ENCODE measurements at regions of chr11 and their contacts with region 1.

Region 1: DNA sequence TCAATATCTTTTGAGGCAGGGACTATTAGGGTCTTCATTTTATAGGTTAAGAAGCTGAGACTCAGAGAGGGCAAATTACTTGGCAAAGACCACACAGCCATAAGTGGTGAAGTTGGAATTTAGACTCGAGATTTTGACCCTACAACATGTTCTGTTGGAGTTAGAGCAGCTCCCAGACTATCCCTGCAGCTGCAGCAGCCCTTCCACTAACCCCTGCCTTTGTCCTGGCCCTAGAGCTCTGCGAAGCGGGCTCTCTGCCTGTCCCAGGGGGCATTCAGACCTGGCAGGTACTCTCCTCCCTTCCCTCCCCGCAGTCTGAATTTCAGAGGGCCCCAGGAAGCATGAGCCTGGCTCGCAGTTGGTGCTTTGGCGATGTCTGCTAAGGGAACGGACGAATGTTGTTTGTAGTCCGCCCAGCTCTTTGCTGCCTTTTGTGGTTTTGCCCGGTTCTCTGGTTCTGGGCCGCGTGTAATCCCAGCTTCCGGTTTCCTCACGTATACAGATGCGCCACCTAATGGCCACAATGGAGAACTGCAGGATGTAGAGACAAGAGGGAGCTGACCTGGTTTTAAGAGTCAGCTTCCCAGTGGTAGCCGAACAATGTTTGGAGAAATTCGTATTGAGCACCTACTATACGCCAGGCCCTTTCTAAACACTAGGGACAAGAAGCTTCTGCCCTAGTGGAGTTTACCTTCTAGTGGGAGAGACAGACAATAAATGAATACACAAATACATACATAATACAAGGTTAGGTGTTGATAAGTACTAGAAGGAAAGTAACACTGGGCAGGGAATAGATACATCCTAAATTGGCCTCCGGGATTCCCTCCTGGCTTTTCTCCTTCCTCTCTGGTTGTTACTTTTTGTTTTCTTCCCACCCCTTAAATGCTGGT is 125.2 kb downstream of the ST3GAL4 start:
- DNase-seq: peak; percentile 83
- H3K4me3 Mint-ChIP-seq: peak overlapping the region; percentile 14
- H3K27ac Mint-ChIP-seq: peak overlapping the region; percentile 81
- H3K4me1 Mint-ChIP-seq: peaks cover 33% of the 10 kb centered on the region
- H3K27me3 Mint-ChIP-seq: peaks cover 9% of the 10 kb centered on the region

Region 2: GRCh38 chr11:126310228-126310991 is 170.2 kb before region 1 on chr11:
- CTCF ChIA-PET with region 1: interaction called, 61 read pairs
- DNase-seq: peak; percentile 68
- H3K4me3 Mint-ChIP-seq: no peak overlapping the region
- H3K27ac Mint-ChIP-seq: peak overlapping the region; percentile 54
- H3K4me1 Mint-ChIP-seq: peaks cover 27% of the 10 kb centered on the region
- H3K27me3 Mint-ChIP-seq: no peaks in the 10 kb centered on the region

Region 3: DNA sequence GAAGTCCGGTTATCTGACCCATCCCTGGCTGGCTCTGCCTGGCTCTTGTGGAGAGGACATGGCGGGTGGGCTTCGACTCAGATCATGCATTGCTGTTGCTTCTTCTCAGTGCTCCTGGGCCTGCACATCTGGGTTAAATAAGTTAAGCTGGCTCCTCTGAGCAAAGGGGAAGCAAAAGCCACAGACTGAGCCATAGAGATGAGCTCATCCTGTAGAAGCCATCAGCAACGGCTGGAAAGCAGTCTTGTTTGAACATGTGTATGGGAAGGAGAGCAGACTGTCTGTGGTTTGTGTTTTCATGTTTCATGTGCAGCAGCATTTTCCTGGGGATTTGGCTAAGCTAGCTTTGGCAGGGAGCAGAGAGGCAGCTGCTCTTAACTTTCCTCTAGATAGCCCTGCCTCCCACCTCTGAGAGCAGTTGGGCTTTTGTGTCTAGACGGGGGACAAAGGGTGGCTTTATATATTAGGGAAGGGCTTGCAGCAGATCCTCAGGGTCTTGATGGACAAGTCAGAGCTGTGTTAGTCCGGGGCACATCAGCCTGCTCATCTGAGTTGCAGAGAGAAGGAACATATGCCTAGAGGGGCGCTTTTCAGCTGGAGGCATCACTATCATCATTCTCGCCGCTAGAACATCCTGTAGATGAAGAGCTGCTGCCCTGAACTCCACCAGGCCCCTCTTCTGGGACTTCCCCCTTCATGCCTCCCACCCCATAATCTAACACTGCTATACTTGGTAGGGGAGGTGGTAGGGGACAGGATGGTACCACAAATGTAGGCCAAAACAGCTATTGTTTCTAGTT is 161.9 kb before region 1 on chr11:
- CTCF ChIA-PET with region 1: interaction called, 11 read pairs
- DNase-seq: peak; percentile 56
- H3K4me3 Mint-ChIP-seq: peak overlapping the region; percentile 1
- H3K27ac Mint-ChIP-seq: peak overlapping the region; percentile 88
- H3K4me1 Mint-ChIP-seq: peaks cover 37% of the 10 kb centered on the region
- H3K27me3 Mint-ChIP-seq: no peaks in the 10 kb centered on the region

Region 4: GRCh38 chr11:126440792-126441514 is 39.7 kb before region 1 on chr11:
- CTCF ChIA-PET with region 1: interaction called, 190 read pairs
- DNase-seq: peak; percentile 80
- H3K4me3 Mint-ChIP-seq: no peak overlapping the region
- H3K27ac Mint-ChIP-seq: no peak overlapping the region
- H3K4me1 Mint-ChIP-seq: peaks cover 8% of the 10 kb centered on the region
- H3K27me3 Mint-ChIP-seq: peaks cover 37% of the 10 kb centered on the region

Region 5: DNA sequence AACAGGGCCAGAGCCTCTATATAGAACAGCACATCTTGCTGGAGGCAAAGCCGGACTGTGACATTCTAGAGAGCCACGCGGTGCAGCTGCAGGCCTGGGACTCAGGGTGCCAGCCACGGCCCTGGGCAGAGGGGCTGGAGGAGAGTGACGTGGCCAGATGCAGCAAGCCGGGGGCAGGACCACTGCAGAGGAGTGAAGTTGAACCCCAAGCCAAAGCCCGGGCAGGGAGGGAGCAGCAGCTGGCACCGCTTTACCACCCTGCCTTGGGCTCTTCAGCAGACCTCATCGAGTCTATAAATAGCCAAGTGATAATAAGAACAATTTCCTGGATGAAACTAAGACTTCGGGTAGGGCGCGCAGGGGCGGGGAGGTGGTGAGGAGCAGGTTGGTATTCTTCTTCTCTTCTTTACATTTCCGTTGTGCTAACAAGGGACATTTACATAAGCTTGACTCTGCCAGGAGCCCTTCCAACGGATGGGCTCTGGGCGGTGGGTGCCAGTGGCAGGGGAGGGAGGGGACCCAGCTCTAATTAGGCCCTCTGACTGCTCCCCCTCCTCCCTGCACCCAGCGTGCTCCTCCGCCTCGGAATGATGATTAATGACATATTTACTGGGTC is 15.0 kb before region 1 on chr11:
- CTCF ChIA-PET with region 1: interaction called, 81 read pairs
- DNase-seq: peak; percentile 80
- H3K4me3 Mint-ChIP-seq: peak overlapping the region; percentile 64
- H3K27ac Mint-ChIP-seq: peak overlapping the region; percentile 96
- H3K4me1 Mint-ChIP-seq: peaks cover 48% of the 10 kb centered on the region
- H3K27me3 Mint-ChIP-seq: peaks cover 40% of the 10 kb centered on the region

Region 6: GRCh38 chr11:126502159-126502558 is 21.5 kb after region 1 on chr11:
- CTCF ChIA-PET with region 1: interaction called, 10 read pairs
- DNase-seq: no peak
- H3K4me3 Mint-ChIP-seq: no peak overlapping the region
- H3K27ac Mint-ChIP-seq: no peak overlapping the region
- H3K4me1 Mint-ChIP-seq: no peaks in the 10 kb centered on the region
- H3K27me3 Mint-ChIP-seq: peaks cover 34% of the 10 kb centered on the region

Region 7: GRCh38 chr11:126585781-126586491 is 105.3 kb after region 1 on chr11:
- CTCF ChIA-PET with region 1: no interaction called
- DNase-seq: no peak
- H3K4me3 Mint-ChIP-seq: no peak overlapping the region
- H3K27ac Mint-ChIP-seq: no peak overlapping the region
- H3K4me1 Mint-ChIP-seq: no peaks in the 10 kb centered on the region
- H3K27me3 Mint-ChIP-seq: no peaks in the 10 kb centered on the region